ENCODE measurements at regions of chr4 and their contacts with region 1.

Region 1: GRCh38 chr4:2811830-2812611 is 19.1 kb downstream of the SH3BP2 start:
- DNase-seq: peak; percentile 63
- H3K4me3 ChIP-seq: peak overlapping the region in 2 of 3 experiments; percentile 39 to 54
- H3K27ac ChIP-seq: peak overlapping the region; percentile 70
- H3K4me1 ChIP-seq: peaks cover 19% of the 10 kb centered on the region
- H3K27me3 ChIP-seq: no peaks in the 10 kb centered on the region
- CTCF ChIP-seq: no peak
- POLR2A ChIP-seq: peak; percentile 85

Region 2: DNA sequence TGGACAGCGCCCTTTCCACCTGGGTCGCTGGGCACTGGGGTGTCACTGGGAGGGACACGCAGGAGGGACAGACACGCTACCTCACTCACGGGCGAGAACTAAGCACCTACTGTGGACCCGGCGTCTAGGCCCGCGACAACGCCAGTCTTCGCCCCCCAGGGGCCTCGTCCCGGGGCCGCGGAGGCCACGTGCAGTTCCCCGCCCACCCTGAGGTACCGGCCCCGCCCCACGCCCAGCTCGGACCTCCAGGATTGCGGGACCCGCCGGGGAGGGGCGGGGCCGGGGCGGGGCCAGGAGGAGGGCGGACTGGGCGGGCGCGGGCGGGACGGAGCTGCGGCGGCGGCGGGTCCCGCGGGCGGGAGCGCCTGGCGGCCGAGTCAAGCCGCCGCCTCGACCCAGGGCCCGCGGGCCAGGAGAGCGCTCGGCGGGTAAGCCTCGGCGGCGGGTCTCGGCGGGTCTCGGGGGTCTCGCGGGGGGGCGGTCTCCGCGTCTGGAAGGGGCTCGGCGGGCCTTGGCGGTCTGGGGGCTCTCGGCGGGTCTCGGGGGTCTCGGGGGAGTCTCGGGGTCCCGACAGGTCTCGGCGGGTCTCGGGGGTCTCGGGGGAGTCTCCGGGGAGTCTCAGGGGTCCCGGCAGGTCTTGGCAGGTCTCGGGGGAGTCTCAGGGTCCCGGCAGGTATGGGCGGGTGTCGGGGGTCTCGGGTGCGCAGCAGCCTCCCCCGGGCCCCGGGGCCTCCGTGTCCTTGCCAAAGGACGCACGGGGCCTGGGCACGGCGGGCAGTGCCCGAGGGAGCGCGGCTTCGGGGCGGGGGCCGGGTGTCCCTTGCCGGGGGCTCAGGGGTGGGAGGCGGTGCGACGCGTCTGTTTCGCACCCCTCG is 19.1 kb before region 1 on chr4 and contains the start of gene SH3BP2:
- CTCF ChIA-PET with region 1: interaction called, 8 read pairs
- POLR2A ChIA-PET with region 1: interaction called, 13 read pairs
- dilution Hi-C with region 1: no loop called
- intact Hi-C with region 1: loop called (anchors 1 kb)
- DNase-seq: peak; percentile 69
- H3K4me3 ChIP-seq: peak within 1 kb of the TSS; percentile 26 to 60 (median 49)
- H3K27ac ChIP-seq: peak within 1 kb of the TSS; percentile 76
- H3K4me1 ChIP-seq: peaks cover 44% of the 10 kb centered on the region
- H3K27me3 ChIP-seq: no peaks in the 10 kb centered on the region
- CTCF ChIP-seq: no peak
- POLR2A ChIP-seq: peak; percentile 23
- total RNA-seq, gene SH3BP2: 69.2 and 73.1 TPM in 2 replicates

Region 3: GRCh38 chr4:2798399-2799223 is 13.4 kb before region 1 on chr4:
- CTCF ChIA-PET with region 1: interaction called, 8 read pairs
- POLR2A ChIA-PET with region 1: interaction called, 13 read pairs
- dilution Hi-C with region 1: no loop called
- intact Hi-C with region 1: loop called (anchors 1 kb)
- DNase-seq: peak; percentile 83
- H3K4me3 ChIP-seq: no peak overlapping the region
- H3K27ac ChIP-seq: peak overlapping the region; percentile 66
- H3K4me1 ChIP-seq: peaks cover 78% of the 10 kb centered on the region
- H3K27me3 ChIP-seq: no peaks in the 10 kb centered on the region
- CTCF ChIP-seq: no peak
- POLR2A ChIP-seq: no peak

Region 4: GRCh38 chr4:2910409-2910808 is 98.4 kb after region 1 on chr4:
- CTCF ChIA-PET with region 1: no interaction called
- POLR2A ChIA-PET with region 1: no interaction called
- dilution Hi-C with region 1: no loop called
- intact Hi-C with region 1: no loop called
- DNase-seq: no peak
- H3K4me3 ChIP-seq: no peak overlapping the region
- H3K27ac ChIP-seq: no peak overlapping the region
- H3K4me1 ChIP-seq: no peaks in the 10 kb centered on the region
- H3K27me3 ChIP-seq: no peaks in the 10 kb centered on the region
- CTCF ChIP-seq: no peak
- POLR2A ChIP-seq: no peak